Heart left ventricle (tissue), 16 donors: ENCODE measurements at regions of chr19 and their contacts with region 1.

Region 1: DNA sequence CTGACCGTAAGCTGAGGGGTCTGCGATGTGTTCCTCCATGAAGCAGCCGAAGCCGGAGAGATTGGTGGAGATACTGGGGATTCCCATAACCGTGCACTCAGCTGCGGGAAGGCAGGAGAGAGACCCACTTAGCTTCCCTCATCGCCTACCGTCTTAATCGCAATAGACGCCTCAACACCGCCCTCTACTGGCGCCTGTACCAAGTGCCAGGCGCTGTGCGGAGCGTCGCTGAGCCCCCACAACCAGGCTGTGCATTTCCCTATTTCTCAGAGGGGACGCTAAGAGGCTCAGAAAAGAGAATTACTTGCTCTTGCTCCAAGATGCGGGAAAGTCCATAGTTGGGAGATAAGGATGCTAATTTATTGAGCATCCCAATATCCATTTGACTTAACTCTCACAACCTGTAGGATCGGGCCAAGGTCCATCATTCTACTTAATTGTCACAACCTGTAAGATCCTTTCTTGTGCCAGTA is 5.8 kb downstream of the FTL start:
- DNase-seq: peak; percentile 77 to 91 (median 82)
- ATAC-seq: peak; percentile 48 to 67 (median 54)
- H3K4me3 ChIP-seq: no peak overlapping the region
- H3K27ac ChIP-seq: peak overlapping the region in 5 of 12 donors; percentile 2 to 23 (median 16)
- H3K4me1 ChIP-seq: peaks cover 5 to 48% (median 31%) of the 10 kb centered on the region in 12 donors
- H3K27me3 ChIP-seq: no peaks in the 10 kb centered on the region
- CTCF ChIP-seq: peak; percentile 83 to 97 (median 92)
- POLR2A ChIP-seq: no peak

Region 2: DNA sequence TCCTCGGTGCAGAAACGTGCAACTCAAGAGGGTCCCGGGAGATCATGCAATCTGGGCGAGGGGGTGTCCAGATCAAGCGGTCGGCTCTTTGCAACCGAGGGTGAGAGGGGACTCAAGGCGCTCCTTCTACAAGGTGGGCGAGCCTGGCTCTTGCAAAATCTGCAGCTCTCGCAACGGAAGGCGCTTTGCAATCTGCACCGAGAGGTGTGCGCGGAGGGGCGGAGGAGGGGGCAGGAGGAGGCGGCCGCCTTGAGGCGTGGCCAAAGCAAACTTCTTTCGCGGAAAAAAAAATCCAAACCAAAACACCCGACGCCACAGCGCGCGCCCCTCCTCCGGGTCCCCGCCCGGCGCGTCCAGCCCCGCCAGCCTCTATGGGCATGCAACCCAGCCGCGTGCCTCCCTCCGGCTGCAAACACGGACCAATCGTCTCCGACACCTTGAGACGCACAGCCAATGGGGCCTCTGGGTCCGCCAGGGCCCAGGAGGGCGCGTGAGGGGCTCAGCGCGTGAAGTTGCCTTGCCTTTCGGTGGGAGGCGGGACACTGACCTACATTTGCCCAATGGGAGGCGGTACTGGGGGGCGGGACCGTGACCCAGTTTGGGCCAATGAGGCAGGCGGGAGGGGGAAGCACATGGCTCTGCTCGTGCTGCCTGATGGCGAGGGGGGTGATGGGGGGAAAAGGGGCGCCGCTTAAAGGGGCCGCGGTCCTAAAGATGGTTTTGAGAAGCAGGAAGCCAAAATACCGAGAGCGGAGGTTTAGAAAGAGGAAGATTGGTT is 333.6 kb before region 1 on chr19 and contains the start of gene DBP:
- intact Hi-C with region 1: loop called in 3 of 10 experiments (anchors 5 to 10 kb)
- DNase-seq: peak; percentile 100
- ATAC-seq: peak; percentile 78 to 87 (median 84)
- H3K4me3 ChIP-seq: peak within 1 kb of the TSS; percentile 19 to 93 (median 78)
- H3K27ac ChIP-seq: peak within 1 kb of the TSS; percentile 85 to 100 (median 96)
- H3K4me1 ChIP-seq: peaks cover 16 to 55% (median 37%) of the 10 kb centered on the region in 12 donors
- H3K27me3 ChIP-seq: no peaks in the 10 kb centered on the region
- CTCF ChIP-seq: no peak
- POLR2A ChIP-seq: no peak
- total RNA-seq, gene DBP: 1.4 to 34.2 (median 12.5) TPM

Region 3: GRCh38 chr19:48780631-48781391 is 190.1 kb before region 1 on chr19:
- intact Hi-C with region 1: loop called in 3 of 10 experiments (anchors 5 kb)
- DNase-seq: no peak
- ATAC-seq: peak in 2 of 4 donors; percentile 18 to 30
- H3K4me3 ChIP-seq: no peak overlapping the region
- H3K27ac ChIP-seq: peak overlapping the region in 10 of 12 donors; percentile 6 to 83 (median 61)
- H3K4me1 ChIP-seq: peaks cover 0 to 26% (median 8%) of the 10 kb centered on the region in 12 donors
- H3K27me3 ChIP-seq: no peaks in the 10 kb centered on the region
- CTCF ChIP-seq: no peak
- POLR2A ChIP-seq: no peak

Region 4: GRCh38 chr19:48835734-48836088 is 135.2 kb before region 1 on chr19:
- intact Hi-C with region 1: loop called in 1 of 10 experiments (anchors 5 kb)
- DNase-seq: peak; percentile 88 to 95 (median 91)
- ATAC-seq: peak; percentile 84 to 95 (median 94)
- H3K4me3 ChIP-seq: peak overlapping the region in 11 of 12 donors; percentile 2 to 57 (median 47)
- H3K27ac ChIP-seq: peak overlapping the region in 7 of 12 donors; percentile 52 to 86 (median 69)
- H3K4me1 ChIP-seq: peaks cover 0 to 19% (median 10%) of the 10 kb centered on the region in 12 donors
- H3K27me3 ChIP-seq: peaks cover 0 to 4% (median 0%) of the 10 kb centered on the region in 9 donors
- CTCF ChIP-seq: peak; percentile 76 to 94 (median 88)
- POLR2A ChIP-seq: no peak